ENCODE measurements at regions of chr17 and their contacts with region 1.

Region 1: GRCh38 chr17:66255112-66255511 is 25.9 kb upstream of the APOH start:
- DNase-seq: peak in 1 of 3 donors; percentile 64
- ATAC-seq: peak; percentile 88
- H3K4me3 ChIP-seq: no peak overlapping the region
- H3K4me1 ChIP-seq: no peaks in the 10 kb centered on the region
- CTCF ChIP-seq: peak; percentile 31

Region 2: GRCh38 chr17:65677932-65678331 is 577.2 kb before region 1 on chr17:
- intact Hi-C with region 1: no loop called
- DNase-seq: no peak
- ATAC-seq: no peak
- H3K4me3 ChIP-seq: no peak overlapping the region
- H3K4me1 ChIP-seq: no peaks in the 10 kb centered on the region
- CTCF ChIP-seq: no peak

Region 3: GRCh38 chr17:66567234-66568170 is 312.4 kb after region 1 on chr17:
- intact Hi-C with region 1: loop called in 1 of 2 experiments (anchors 10 kb)
- DNase-seq: peak; percentile 84 to 98 (median 90)
- ATAC-seq: peak; percentile 98
- H3K4me3 ChIP-seq: no peak overlapping the region
- H3K4me1 ChIP-seq: no peaks in the 10 kb centered on the region
- CTCF ChIP-seq: peak; percentile 76

Region 4: GRCh38 chr17:66636111-66636510 is 381.0 kb after region 1 on chr17:
- intact Hi-C with region 1: no loop called
- DNase-seq: no peak
- ATAC-seq: no peak
- H3K4me3 ChIP-seq: no peak overlapping the region
- H3K4me1 ChIP-seq: no peaks in the 10 kb centered on the region
- CTCF ChIP-seq: no peak

Region 5: DNA sequence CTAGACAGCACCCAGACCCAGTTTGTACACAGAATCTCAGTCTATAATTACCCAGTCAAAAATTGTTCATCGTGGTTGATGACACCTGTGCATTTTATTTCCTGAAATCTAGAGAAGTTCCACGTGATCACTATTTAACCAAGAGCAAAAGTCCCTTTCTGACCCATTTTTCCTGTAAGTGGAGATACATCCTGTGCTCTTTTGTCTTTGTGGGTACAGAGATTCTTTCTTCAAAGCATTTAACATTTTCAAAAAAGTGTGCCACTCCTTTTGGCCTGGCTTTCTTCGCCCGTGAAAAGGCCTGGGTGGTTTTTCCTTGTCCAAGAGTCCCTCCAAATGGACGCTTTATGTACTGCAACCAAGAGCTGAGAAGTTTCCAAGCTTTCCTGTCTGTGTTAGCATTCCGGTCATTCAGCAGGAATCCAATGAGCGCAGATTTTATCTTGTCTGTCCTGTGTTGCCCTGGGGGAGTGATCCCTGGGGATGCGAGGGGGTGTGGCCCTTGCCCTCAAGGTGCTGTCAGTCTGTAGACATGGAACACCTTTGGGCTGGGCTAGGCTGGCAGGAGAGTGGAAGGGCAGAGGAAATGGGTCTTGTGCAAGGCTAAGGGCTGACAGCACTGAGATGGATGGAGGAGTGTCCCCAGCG is 418.7 kb after region 1 on chr17:
- intact Hi-C with region 1: loop called in 1 of 2 experiments (anchors 5 kb)
- DNase-seq: peak in 2 of 3 donors; percentile 57 to 83
- ATAC-seq: peak; percentile 64
- H3K4me3 ChIP-seq: no peak overlapping the region
- H3K4me1 ChIP-seq: peaks cover 11% of the 10 kb centered on the region
- CTCF ChIP-seq: peak; percentile 45

Measured in mucosa of descending colon (tissue), 3 donors.